ENCODE measurements at regions of chr3 and their contacts with region 1.

Region 1: GRCh38 chr3:187745201-187746058 is at the start of gene BCL6:
- DNase-seq: peak; percentile 97
- total RNA-seq, gene BCL6: 8.1 and 10.2 TPM in 2 replicates

Region 2: GRCh38 chr3:187919048-187919447 is 173.6 kb after region 1 on chr3:
- in situ Hi-C with region 1: no loop called
- DNase-seq: no peak

Region 3: DNA sequence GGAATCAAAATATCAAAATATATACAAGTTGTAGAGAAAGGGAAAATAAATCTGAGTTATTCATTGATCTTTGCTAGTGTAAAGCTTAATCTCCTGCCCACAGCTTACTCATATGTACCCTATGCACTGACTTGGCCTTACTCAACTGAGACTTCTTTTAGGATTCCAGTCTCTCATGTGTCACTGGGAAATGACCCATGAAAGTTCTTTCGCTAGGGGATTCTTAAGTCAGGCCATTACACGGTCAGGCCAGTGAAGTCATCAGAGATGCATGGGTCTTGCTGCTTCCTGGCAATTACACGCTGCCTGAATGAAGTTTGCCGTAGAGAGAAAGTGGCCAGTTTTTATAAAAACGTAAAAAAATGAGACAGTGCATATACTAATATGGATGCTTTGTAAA is 387.8 kb after region 1 on chr3:
- in situ Hi-C with region 1: loop called (anchors 10 kb)
- DNase-seq: no peak

Region 4: GRCh38 chr3:188421836-188422540 is 676.6 kb after region 1 on chr3:
- in situ Hi-C with region 1: loop called (anchors 25 kb)
- DNase-seq: no peak

Region 5: DNA sequence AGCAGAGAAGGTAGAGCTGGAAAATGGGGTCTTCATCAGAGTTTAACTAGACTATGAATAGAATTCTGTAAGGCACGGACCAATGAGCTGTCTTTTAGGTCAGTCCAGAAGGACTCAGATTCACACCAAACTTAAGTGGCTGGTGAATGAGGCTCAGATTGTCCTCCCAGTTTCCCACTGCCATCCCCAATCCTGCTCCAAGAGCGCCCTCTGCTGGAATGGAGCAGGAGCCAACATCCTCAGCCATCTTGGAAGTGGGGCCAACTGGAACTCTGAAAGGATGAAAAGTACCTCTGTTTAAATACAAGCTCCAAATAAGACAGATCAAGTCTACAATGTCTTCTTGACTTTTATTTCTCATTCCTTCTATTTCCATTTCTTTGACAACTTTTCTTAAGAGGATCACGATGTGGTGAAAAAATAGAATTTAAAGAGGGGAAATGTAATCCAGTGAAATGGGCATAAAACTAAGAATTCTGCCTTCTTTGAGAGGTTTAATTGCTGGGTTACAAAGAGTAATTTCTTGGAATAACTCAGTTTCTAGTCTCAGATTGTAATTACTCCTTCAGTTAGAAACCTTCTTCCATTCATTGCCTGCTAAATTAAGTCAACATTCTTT is 1209.3 kb after region 1 on chr3:
- in situ Hi-C with region 1: loop called (anchors 10 kb)
- DNase-seq: peak; percentile 92

Region 6: GRCh38 chr3:189148081-189148507 is 1402.7 kb after region 1 on chr3:
- in situ Hi-C with region 1: loop called (anchors 10 kb)
- DNase-seq: peak; percentile 74